ENCODE measurements at regions of chr12 and their contacts with region 1.

Region 1: GRCh38 chr12:102484428-102484958 is 4.1 kb upstream of the IGF1 start:
- DNase-seq: peak; percentile 42
- H3K4me3 Mint-ChIP-seq: peak overlapping the region; percentile 73
- H3K27ac Mint-ChIP-seq: peak overlapping the region; percentile 92
- H3K4me1 Mint-ChIP-seq: peaks cover 33% of the 10 kb centered on the region
- H3K27me3 Mint-ChIP-seq: no peaks in the 10 kb centered on the region

Region 2: DNA sequence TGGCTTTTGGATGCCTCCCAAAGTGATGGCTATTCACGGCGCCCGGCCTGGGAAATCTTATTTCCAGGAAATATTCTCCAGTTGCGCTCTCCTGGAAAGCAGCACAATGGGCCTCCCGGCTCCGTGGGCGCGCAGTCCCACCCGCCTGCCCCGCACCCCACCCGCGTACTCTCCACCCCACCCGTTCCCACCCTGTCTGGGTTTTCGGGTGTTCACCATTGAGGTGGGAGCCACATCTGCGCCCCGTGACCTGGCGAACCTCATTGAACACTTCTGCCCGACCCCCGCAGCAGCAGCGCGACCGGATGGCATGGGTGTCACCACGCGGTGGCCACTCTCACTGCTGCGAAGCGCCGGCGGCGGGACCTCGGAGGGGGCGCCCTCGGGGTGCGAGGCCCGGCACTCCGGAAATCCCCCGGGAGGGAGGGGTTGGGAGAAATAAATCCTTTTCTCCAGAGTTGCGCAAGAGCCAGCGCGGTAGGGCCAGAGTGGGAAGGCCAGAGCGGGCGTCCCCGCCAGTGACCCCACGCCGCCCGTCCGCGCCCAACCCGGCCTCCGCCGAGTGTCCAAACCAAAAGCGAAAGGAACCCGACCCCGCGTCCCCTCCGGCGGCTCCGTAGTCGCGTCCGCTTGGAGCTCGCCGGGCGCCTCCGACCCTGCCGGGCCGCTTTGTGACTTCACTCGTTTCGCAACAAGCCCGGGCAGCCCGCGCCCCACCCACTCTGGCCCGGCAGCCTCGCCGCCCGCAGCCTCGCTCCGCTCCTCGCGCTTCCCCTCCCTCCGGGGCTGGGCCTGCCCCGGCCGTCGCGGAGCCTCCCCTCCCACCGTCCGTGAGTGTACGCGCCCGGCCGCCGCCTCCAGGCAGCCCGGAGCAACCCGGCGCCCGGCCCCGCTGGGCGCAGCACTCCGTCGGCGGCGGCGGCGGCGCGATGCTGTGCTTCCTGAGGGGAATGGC is 607.4 kb before region 1 on chr12 and contains the start of gene DRAM1:
- intact Hi-C with region 1: loop called (anchors 5 kb)
- DNase-seq: peak; percentile 78
- H3K4me3 Mint-ChIP-seq: peak within 1 kb of the TSS; percentile 90
- H3K27ac Mint-ChIP-seq: peak within 1 kb of the TSS; percentile 83
- H3K4me1 Mint-ChIP-seq: peaks cover 12% of the 10 kb centered on the region
- H3K27me3 Mint-ChIP-seq: no peaks in the 10 kb centered on the region
- total RNA-seq, gene DRAM1: 3.2 and 4.1 TPM in 2 replicates

Region 3: DNA sequence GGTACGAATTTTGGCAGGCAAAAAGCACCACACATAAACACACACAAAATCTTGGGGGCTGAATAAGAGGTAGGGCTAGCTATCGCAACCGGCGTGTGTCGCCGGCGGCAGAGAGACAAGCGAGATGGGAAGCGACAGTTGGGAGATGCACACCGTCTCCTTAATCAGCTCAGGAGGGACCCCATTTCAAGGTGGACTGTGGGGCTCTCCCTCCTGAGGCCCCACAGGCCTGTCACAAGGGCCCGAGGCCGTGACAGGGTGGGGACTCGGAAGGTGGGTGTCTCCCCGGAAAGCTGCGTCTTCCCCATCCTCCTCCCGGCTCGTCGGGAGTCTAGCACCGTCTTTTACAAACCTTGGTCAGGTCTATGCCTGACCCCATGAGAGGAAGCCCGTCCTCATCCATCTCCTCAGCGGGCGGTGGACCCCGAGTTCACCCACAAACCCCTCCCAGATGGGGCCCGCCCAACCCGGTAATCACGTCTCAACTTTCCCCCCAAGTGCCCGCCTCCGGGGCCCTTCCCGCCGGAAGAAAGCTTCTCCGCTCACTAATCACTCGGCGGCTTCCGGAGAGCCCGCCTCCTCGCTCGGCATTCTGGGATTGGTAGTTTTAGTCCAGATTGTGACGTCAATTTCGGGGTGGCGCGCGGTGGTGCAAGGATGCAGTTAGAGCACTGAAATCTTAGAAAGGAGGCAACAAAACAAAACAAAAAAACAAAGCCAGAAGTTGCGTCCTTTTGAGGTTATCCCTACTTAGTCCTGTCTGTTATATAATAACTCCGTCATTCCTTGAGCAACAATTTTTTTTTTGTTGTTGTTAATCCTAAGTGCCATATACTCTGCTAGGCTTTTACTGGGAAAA is 422.7 kb before region 1 on chr12 and contains the start of gene WASHC3:
- intact Hi-C with region 1: loop called (anchors 1 kb)
- DNase-seq: peak; percentile 94
- H3K4me3 Mint-ChIP-seq: peak within 1 kb of the TSS; percentile 93
- H3K27ac Mint-ChIP-seq: peak within 1 kb of the TSS; percentile 97
- H3K4me1 Mint-ChIP-seq: peaks cover 42% of the 10 kb centered on the region
- H3K27me3 Mint-ChIP-seq: no peaks in the 10 kb centered on the region
- total RNA-seq, gene WASHC3: 20.4 and 26.3 TPM in 2 replicates

Region 4: DNA sequence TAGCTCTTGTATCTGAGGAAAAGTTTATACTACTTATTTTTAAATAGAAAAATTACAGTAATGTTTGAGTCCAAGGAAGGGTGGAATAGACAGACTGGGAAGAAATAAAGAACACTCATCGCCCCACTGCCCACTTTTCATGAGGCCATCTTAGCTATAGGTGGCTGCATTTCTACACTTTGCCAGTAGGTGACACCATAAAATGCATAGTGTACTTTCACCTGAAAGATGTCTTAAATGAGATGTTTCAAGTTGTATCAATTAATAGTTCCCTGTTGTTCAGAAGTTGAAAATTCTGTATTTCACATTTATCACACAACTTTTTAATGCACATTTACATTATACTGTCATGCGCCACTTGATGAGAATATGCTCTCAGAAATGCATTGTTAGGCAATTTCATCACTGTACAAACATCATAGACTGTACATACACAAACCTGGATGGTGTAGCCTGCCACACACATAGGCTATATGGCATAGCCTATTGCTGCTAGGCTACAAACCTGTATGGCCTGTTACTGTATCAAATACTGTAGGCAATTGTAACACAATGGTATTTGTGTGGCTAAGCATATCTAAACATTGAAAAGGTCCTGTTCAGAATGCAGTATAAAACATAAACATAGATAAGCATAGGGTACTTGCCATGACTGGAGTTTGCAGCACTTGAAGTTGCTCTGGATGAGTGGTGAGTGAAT is 314.4 kb before region 1 on chr12:
- intact Hi-C with region 1: loop called (anchors 1 kb)
- DNase-seq: no peak
- H3K4me3 Mint-ChIP-seq: no peak overlapping the region
- H3K27ac Mint-ChIP-seq: no peak overlapping the region
- H3K4me1 Mint-ChIP-seq: peaks cover 29% of the 10 kb centered on the region
- H3K27me3 Mint-ChIP-seq: no peaks in the 10 kb centered on the region

Region 5: DNA sequence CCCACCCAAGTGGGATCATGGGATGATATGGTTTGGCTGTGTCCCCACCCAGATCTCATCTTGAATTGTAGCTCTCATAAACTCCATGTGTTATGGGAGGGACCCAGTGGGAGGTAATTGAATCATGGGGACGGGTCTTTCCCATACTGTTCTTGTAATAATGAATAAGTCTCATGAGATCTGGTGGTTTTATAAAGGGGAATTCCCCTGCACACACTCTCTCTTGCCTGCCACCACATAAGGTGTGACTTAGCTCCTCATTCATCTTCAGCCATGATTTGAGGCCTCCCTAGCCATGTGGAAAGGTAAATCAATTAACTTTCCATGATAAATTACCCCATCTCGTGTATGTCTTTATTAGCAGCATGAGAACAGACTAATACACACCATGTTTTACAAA is 113.3 kb before region 1 on chr12:
- intact Hi-C with region 1: loop called (anchors 2 kb)
- DNase-seq: no peak
- H3K4me3 Mint-ChIP-seq: no peak overlapping the region
- H3K27ac Mint-ChIP-seq: no peak overlapping the region
- H3K4me1 Mint-ChIP-seq: peaks cover 7% of the 10 kb centered on the region
- H3K27me3 Mint-ChIP-seq: no peaks in the 10 kb centered on the region

Region 6: GRCh38 chr12:102728506-102729242 is 244.2 kb after region 1 on chr12:
- intact Hi-C with region 1: loop called (anchors 5 kb)
- DNase-seq: no peak
- H3K4me3 Mint-ChIP-seq: no peak overlapping the region
- H3K27ac Mint-ChIP-seq: peak overlapping the region; percentile 24
- H3K4me1 Mint-ChIP-seq: peaks cover 11% of the 10 kb centered on the region
- H3K27me3 Mint-ChIP-seq: no peaks in the 10 kb centered on the region

Region 7: GRCh38 chr12:102806110-102806509 is 321.6 kb after region 1 on chr12:
- intact Hi-C with region 1: no loop called
- DNase-seq: no peak
- H3K4me3 Mint-ChIP-seq: no peak overlapping the region
- H3K27ac Mint-ChIP-seq: no peak overlapping the region
- H3K4me1 Mint-ChIP-seq: no peaks in the 10 kb centered on the region
- H3K27me3 Mint-ChIP-seq: no peaks in the 10 kb centered on the region